Dendritic cell treated with granulocyte-macrophage colony-stimulating factor and Interleukin-4, amounts not matched to agents 40 ng/mL and 50 ng/mL, for 4 days (primary cell): ENCODE measurements at regions of chr5 and their contacts with region 1.

Region 1: DNA sequence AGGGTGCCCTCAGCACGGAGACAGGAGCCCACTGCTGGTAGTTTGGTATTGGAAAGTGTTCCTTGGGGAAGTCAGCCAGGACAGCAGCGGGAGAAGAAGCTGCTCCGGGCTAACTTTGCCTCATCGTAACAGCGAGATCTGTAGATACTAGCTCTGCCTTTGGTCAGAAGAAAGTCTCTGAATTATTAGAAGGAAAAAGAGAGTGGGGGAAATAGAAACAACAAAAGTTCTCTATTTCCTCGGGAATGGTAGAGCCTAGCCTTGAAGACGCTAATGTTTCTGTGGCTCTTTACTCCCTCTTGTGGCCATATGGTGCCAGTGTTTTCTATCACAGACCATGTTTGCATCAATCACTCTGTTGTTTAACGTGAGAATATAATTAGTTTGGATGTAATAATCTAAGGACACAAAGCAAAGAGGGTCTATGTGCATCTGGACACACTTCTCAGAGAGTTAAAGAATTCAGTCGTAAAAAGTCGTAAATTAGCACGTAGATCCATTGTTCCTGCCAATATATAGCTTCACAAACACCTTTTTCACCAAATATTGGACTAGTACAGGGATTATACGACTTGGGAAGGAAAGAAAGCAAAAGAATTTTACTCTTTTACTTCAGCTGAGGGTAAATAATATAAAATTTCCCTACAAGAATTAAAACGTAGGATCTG is 40.2 kb upstream of the HSD17B4 start:
- H3K4me3 Mint-ChIP-seq: peak overlapping the region; percentile 98
- H3K27ac Mint-ChIP-seq: peak overlapping the region; percentile 94
- H3K4me1 Mint-ChIP-seq: peaks cover 62% of the 10 kb centered on the region
- H3K27me3 Mint-ChIP-seq: no peaks in the 10 kb centered on the region

Region 2: GRCh38 chr5:118987988-118988865 is 423.8 kb before region 1 on chr5 and contains the start of gene DTWD2:
- intact Hi-C with region 1: loop called (anchors 1 kb)
- H3K4me3 Mint-ChIP-seq: peak within 1 kb of the TSS; percentile 80
- H3K27ac Mint-ChIP-seq: peak within 1 kb of the TSS; percentile 88
- H3K4me1 Mint-ChIP-seq: peaks cover 13% of the 10 kb centered on the region
- H3K27me3 Mint-ChIP-seq: peaks cover 2% of the 10 kb centered on the region

Region 3: GRCh38 chr5:119070828-119071572 is 341.1 kb before region 1 on chr5 and contains the start of gene DMXL1:
- intact Hi-C with region 1: loop called (anchors 5 kb)
- H3K4me3 Mint-ChIP-seq: peak within 1 kb of the TSS; percentile 89
- H3K27ac Mint-ChIP-seq: peak within 1 kb of the TSS; percentile 97
- H3K4me1 Mint-ChIP-seq: peaks cover 42% of the 10 kb centered on the region
- H3K27me3 Mint-ChIP-seq: no peaks in the 10 kb centered on the region

Region 4: DNA sequence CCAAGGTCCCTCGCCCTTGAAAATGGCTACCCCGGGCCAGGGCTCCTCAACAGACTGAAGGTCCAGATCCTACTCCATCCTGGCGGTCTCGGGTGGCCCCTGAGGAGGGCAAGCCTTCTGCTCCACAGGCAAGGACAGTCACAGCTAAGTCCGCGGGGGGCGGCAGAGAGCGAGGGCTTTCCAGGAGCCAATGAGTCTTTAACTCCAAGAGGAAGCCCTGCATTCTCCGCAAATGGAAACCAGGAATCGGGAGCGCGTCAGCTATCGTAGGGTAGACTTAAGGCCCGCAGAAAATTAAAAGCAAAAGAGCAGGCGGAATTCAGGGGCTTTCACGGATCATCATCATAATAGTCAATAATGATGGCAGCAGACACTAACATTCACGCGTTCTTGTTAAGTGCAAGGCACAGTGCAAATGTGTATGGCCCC is 144.1 kb before region 1 on chr5:
- intact Hi-C with region 1: loop called (anchors 5 kb)
- H3K4me3 Mint-ChIP-seq: peak overlapping the region; percentile 91
- H3K27ac Mint-ChIP-seq: peak overlapping the region; percentile 94
- H3K4me1 Mint-ChIP-seq: peaks cover 56% of the 10 kb centered on the region
- H3K27me3 Mint-ChIP-seq: no peaks in the 10 kb centered on the region

Region 5: DNA sequence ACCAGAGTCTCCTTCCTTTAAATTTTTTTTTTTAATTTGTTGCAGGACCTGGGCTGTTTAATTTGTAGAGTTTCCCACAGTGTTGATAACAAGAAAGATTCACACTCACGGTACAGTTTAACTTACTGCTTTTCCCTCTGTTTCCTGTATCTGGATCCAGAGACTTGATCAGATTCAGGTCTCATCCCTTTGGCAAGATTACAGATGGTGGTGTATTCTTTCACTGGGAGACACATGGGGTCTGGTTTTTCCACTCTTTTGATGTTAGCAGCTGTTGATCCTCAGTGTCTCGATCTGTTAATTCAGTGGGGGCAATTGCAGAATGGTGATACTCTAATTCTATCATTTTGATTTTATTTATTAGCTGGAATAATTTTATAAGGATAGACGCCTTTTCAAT is 131.7 kb before region 1 on chr5:
- intact Hi-C with region 1: no loop called
- H3K4me3 Mint-ChIP-seq: no peak overlapping the region
- H3K27ac Mint-ChIP-seq: no peak overlapping the region
- H3K4me1 Mint-ChIP-seq: peaks cover 51% of the 10 kb centered on the region
- H3K27me3 Mint-ChIP-seq: no peaks in the 10 kb centered on the region

Region 6: GRCh38 chr5:119315516-119315949 is 96.5 kb before region 1 on chr5:
- intact Hi-C with region 1: loop called (anchors 2 kb)
- H3K4me3 Mint-ChIP-seq: no peak overlapping the region
- H3K27ac Mint-ChIP-seq: peak overlapping the region; percentile 75
- H3K4me1 Mint-ChIP-seq: peaks cover 67% of the 10 kb centered on the region
- H3K27me3 Mint-ChIP-seq: no peaks in the 10 kb centered on the region

Region 7: GRCh38 chr5:119355685-119356611 is 56.1 kb before region 1 on chr5 and contains the start of gene TNFAIP8:
- intact Hi-C with region 1: loop called (anchors 2 kb)
- H3K4me3 Mint-ChIP-seq: peak within 1 kb of the TSS; percentile 99
- H3K27ac Mint-ChIP-seq: peak within 1 kb of the TSS; percentile 98
- H3K4me1 Mint-ChIP-seq: peaks cover 58% of the 10 kb centered on the region
- H3K27me3 Mint-ChIP-seq: no peaks in the 10 kb centered on the region

Region 8: GRCh38 chr5:119583684-119584083 is 171.6 kb after region 1 on chr5:
- intact Hi-C with region 1: no loop called
- H3K4me3 Mint-ChIP-seq: no peak overlapping the region
- H3K27ac Mint-ChIP-seq: no peak overlapping the region
- H3K4me1 Mint-ChIP-seq: no peaks in the 10 kb centered on the region
- H3K27me3 Mint-ChIP-seq: peaks cover 6% of the 10 kb centered on the region